CD4-positive, alpha-beta memory T cell (primary cell): ENCODE measurements at regions of chr15 and their contacts with region 1.

Region 1: DNA sequence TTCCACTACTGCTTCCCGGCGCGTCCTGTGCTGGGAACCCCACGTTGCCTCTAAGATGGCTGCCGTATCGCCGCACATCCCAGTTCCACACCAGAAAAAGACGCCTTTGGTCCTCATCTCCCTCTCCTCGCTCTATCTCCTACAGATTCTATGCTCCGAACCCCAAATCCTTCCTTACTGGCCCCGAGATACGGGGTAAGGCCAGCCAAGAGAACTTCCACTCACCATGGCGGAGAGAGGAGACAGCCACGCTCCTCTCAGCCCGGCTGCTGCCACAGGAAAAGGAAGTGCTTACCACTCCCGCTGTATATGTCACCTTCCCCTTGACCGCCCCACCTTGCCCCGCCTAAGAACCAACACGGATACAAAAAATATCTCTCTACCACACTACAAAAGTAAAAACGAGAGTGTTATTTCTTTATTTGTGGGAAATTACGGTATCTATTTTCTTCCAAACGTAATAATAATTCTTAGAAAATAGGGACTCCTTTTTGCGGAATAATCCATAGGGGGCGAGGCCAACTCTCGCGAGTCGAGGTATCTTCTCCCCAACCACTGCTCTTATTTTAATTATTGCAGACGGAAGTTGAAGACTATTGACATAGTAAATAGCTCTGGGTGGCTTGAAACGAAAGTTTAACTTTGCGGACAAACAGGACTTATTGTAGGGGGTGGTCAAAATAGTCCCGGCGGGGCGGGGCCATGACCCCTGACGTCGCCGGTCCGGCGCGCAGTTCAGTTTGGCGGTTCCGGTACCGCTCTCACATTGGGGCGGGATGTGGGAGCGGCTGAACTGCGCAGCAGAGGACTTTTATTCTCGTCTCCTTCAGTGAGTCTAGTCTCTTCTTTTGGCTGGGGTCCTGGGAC is at the starts of genes RPL4 and ZWILCH:
- DNase-seq: peak; percentile 85 to 89 (median 88)
- H3K4me3 ChIP-seq: peak within 1 kb of the TSS; percentile 86 to 97
- H3K4me3 Mint-ChIP-seq: peak within 1 kb of the TSS; percentile 98 to 100 (median 100)
- H3K27ac ChIP-seq: peak within 1 kb of the TSS; percentile 89
- H3K27ac Mint-ChIP-seq: peak within 1 kb of the TSS; percentile 96 to 100 (median 99)
- H3K4me1 ChIP-seq: peaks cover 35% of the 10 kb centered on the region
- H3K4me1 Mint-ChIP-seq: peaks cover 31 to 67% (median 41%) of the 10 kb centered on the region in 4 donors
- H3K27me3 ChIP-seq: no peaks in the 10 kb centered on the region
- H3K27me3 Mint-ChIP-seq: no peaks in the 10 kb centered on the region
- total RNA-seq, gene RPL4: 3,820 to 4,004 TPM
- total RNA-seq, gene ZWILCH: 5.1 to 6.5 TPM

Region 2: DNA sequence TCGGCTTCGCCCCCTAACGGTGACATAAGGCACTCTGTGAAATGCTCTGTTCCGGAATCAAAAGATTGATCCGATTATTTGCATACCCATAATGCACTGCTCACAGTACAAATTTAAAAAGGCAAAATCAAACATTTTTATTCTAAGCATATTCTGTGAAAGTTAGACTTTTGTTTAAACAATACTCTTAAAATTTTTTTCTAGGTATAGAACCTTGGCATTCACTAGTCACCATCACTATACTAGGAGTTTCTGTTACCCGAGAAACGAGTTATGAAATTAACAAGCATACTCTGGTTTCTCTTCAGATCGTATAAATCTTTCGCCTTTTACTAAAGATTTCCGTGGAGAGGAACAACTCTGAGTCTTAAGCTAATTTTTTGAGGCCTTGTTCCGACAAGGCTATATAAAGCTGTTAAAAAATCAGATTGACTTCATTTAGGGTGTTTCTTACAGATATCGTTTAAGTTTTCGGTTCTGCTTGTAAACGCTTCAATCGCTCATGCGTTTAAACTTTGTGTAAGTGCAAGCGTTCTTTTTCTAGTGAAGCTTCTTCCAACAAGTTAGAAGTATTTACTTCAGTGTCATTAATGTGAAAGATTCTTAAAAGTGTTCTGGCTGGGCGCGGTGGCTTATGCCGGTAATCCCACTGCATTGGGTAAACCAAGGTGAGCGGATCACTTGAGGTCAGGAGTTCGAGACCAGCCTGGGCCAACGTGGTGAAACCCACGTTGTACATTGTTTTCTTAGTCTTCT is 1200.2 kb before region 1 on chr15 and contains the start of gene RNU5B-1:
- CTCF ChIA-PET with region 1: no interaction called
- POLR2A ChIA-PET with region 1: no interaction called
- intact Hi-C with region 1: loop called (anchors 10 kb)
- DNase-seq: peak; percentile 85 to 92 (median 91)
- H3K4me3 ChIP-seq: peak within 1 kb of the TSS; percentile 61 to 73
- H3K4me3 Mint-ChIP-seq: peak within 1 kb of the TSS; percentile 91 to 98 (median 95)
- H3K27ac ChIP-seq: peak within 1 kb of the TSS; percentile 92
- H3K27ac Mint-ChIP-seq: peak within 1 kb of the TSS; percentile 96 to 100 (median 99)
- H3K4me1 ChIP-seq: peaks cover 24% of the 10 kb centered on the region
- H3K4me1 Mint-ChIP-seq: peaks cover 19 to 34% (median 26%) of the 10 kb centered on the region in 4 donors
- H3K27me3 ChIP-seq: no peaks in the 10 kb centered on the region
- H3K27me3 Mint-ChIP-seq: no peaks in the 10 kb centered on the region
- total RNA-seq, gene RNU5B-1: 24.0 TPM in 1 of 2 experiments, not detected in the other

Region 3: GRCh38 chr15:66293419-66294156 is 211.2 kb before region 1 on chr15 and contains the start of gene DIS3L:
- CTCF ChIA-PET with region 1: interaction called, 7 read pairs
- POLR2A ChIA-PET with region 1: interaction called, 30 read pairs
- intact Hi-C with region 1: loop called (anchors 2 kb)
- DNase-seq: peak; percentile 65 to 78 (median 72)
- H3K4me3 ChIP-seq: peak within 1 kb of the TSS; percentile 57 to 91
- H3K4me3 Mint-ChIP-seq: peak within 1 kb of the TSS; percentile 85 to 93 (median 90)
- H3K27ac ChIP-seq: peak within 1 kb of the TSS; percentile 91
- H3K27ac Mint-ChIP-seq: peak within 1 kb of the TSS; percentile 93 to 96 (median 95)
- H3K4me1 ChIP-seq: peaks cover 50% of the 10 kb centered on the region
- H3K4me1 Mint-ChIP-seq: peaks cover 26 to 50% (median 41%) of the 10 kb centered on the region in 4 donors
- H3K27me3 ChIP-seq: no peaks in the 10 kb centered on the region
- H3K27me3 Mint-ChIP-seq: no peaks in the 10 kb centered on the region
- total RNA-seq, gene DIS3L: 36.8 to 40.3 TPM

Region 4: GRCh38 chr15:66356345-66357236 is 148.2 kb before region 1 on chr15 and contains the start of gene TIPIN:
- CTCF ChIA-PET with region 1: interaction called, 33 read pairs
- POLR2A ChIA-PET with region 1: interaction called, 10 read pairs
- intact Hi-C with region 1: loop called (anchors 1 kb)
- DNase-seq: peak; percentile 95 to 97 (median 96)
- H3K4me3 ChIP-seq: peak within 1 kb of the TSS; percentile 79 to 80
- H3K4me3 Mint-ChIP-seq: peak within 1 kb of the TSS; percentile 91 to 99 (median 98)
- H3K27ac ChIP-seq: peak within 1 kb of the TSS; percentile 66
- H3K27ac Mint-ChIP-seq: peak within 1 kb of the TSS; percentile 90 to 98 (median 97)
- H3K4me1 ChIP-seq: peaks cover 15% of the 10 kb centered on the region
- H3K4me1 Mint-ChIP-seq: peaks cover 15 to 23% (median 19%) of the 10 kb centered on the region in 4 donors
- H3K27me3 ChIP-seq: no peaks in the 10 kb centered on the region
- H3K27me3 Mint-ChIP-seq: no peaks in the 10 kb centered on the region
- total RNA-seq, gene TIPIN: 5.9 to 9.0 TPM

Region 5: GRCh38 chr15:66472176-66472999 is 32.4 kb before region 1 on chr15:
- CTCF ChIA-PET with region 1: interaction called, 4 read pairs
- POLR2A ChIA-PET with region 1: interaction called, 17 read pairs
- intact Hi-C with region 1: no loop called
- DNase-seq: peak; percentile 64 to 79 (median 70)
- H3K4me3 ChIP-seq: no peak overlapping the region
- H3K4me3 Mint-ChIP-seq: peak overlapping the region; percentile 44 to 86 (median 76)
- H3K27ac ChIP-seq: peak overlapping the region; percentile 45
- H3K27ac Mint-ChIP-seq: peak overlapping the region; percentile 83 to 97 (median 90)
- H3K4me1 ChIP-seq: peaks cover 32% of the 10 kb centered on the region
- H3K4me1 Mint-ChIP-seq: peaks cover 27 to 55% (median 41%) of the 10 kb centered on the region in 4 donors
- H3K27me3 ChIP-seq: no peaks in the 10 kb centered on the region
- H3K27me3 Mint-ChIP-seq: no peaks in the 10 kb centered on the region

Region 6: DNA sequence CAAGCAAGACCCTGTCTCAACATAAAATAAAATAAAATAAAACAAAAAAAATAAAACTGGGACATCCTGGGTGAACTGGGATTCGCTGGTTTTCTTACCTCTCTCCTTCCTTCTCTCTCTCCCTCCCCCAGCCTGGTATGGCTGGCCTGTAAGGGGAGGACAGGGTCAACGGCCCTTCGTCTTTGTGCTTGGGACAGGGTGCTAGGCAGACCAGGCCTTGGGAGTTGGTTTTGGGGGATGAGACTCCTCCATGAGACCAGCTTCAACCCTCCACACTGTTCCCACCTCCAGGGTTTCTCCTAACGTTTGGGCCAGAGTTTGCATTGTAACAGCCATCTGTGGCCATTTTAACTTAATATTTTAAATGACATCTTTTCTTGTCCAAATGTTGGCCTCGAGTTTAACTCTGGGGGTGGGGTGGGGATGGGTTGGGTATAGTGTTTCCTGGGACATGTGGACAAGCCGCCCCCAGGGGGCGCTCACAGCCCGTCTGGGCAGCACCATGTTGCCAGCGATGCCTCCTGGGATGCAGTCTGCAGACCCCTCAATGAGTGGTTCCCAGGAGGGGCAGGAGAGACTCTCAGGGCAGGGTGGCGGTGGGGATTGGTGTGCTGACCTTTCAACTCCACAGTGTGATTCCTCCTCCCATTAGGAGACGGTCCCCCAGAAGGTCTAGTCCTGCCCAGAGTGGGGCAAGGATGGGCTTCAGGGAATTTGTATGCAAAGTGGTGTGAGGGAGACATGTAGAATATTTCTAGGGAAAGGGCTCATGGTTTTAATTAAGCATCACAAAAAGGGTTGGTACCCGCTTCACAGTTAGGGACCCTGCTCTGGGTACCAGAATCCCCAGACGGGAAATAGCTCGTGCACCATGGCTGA is 98.7 kb after region 1 on chr15:
- CTCF ChIA-PET with region 1: no interaction called
- POLR2A ChIA-PET with region 1: no interaction called
- intact Hi-C with region 1: no loop called
- DNase-seq: peak in 4 of 5 donors; percentile 41 to 49 (median 48)
- H3K4me3 ChIP-seq: no peak overlapping the region
- H3K4me3 Mint-ChIP-seq: no peak overlapping the region
- H3K27ac ChIP-seq: no peak overlapping the region
- H3K27ac Mint-ChIP-seq: no peak overlapping the region
- H3K4me1 ChIP-seq: no peaks in the 10 kb centered on the region
- H3K4me1 Mint-ChIP-seq: peaks cover 0 to under 1% (median under 1%) of the 10 kb centered on the region in 4 donors
- H3K27me3 ChIP-seq: no peaks in the 10 kb centered on the region
- H3K27me3 Mint-ChIP-seq: peaks cover 5 to 12% of the 10 kb centered on the region in 2 donors

Region 7: DNA sequence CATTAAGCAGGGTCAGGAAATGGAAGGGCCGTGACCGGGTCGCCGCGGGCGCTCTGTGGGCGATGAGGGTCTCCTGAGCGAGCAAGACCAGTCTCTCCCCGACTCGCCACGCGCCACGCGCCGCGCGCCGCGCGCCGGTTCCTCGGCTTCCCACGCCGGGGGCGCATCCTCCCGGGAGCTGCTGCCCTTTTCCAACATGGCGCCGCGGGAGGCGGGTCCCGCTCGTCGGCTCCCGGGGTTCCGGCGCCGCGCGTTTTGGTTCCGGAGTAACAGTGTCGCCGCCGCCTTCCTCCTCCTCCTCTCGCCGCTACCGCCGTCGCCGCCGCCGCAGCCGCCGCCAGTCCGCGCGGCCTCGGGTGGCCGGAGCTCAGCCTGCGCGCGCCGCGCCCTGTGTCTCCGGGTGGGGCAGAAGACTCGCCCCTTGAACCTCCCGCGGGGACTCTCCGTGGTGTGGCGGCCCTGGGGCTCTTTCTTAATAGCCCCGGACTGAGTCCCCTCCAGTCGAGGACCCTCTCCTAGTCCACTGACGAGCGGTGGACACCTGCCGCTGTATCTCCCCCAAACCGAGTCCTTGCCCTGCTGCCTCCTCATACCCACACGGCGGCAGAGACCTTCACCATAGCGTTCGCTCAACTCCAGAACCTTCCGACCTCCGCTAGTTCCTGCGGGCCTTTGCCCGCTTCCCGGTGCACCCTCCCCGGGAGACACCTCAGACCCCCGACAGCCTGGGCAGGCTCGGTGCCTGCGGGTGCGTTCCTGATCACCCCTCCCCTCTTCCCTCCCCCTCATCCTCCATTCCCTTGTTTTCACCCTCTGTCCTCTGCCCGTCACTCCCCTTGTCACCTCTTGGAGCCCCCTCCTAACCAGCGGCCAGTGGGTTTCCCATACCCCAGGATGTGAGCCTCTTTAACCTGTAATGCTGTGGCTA is 1037.9 kb after region 1 on chr15 and contains the start of gene MAP2K5:
- CTCF ChIA-PET with region 1: no interaction called
- POLR2A ChIA-PET with region 1: no interaction called
- intact Hi-C with region 1: loop called (anchors 5 kb)
- DNase-seq: peak; percentile 75 to 84 (median 79)
- H3K4me3 ChIP-seq: peak within 1 kb of the TSS; percentile 67 to 81
- H3K4me3 Mint-ChIP-seq: peak within 1 kb of the TSS; percentile 94 to 98 (median 96)
- H3K27ac ChIP-seq: peak within 1 kb of the TSS; percentile 77
- H3K27ac Mint-ChIP-seq: peak within 1 kb of the TSS; percentile 90 to 100 (median 99)
- H3K4me1 ChIP-seq: peaks cover 49% of the 10 kb centered on the region
- H3K4me1 Mint-ChIP-seq: peaks cover 38 to 65% (median 51%) of the 10 kb centered on the region in 4 donors
- H3K27me3 ChIP-seq: no peaks in the 10 kb centered on the region
- H3K27me3 Mint-ChIP-seq: no peaks in the 10 kb centered on the region
- total RNA-seq, gene MAP2K5: 27.8 to 31.4 TPM